ENCODE measurements at regions of chr12 and their contacts with region 1.

Region 1: GRCh38 chr12:92505254-92506231 is 197.2 kb upstream of the PLEKHG7 start:
- DNase-seq: peak in 1 of 2 donors; percentile 79
- H3K4me3 ChIP-seq: peak overlapping the region; percentile 20 to 44
- H3K27ac ChIP-seq: peak overlapping the region; percentile 82
- H3K4me1 ChIP-seq: peaks cover 5 to 23% of the 10 kb centered on the region in 2 donors
- H3K27me3 ChIP-seq: no peaks in the 10 kb centered on the region
- CTCF ChIP-seq: no peak

Region 2: GRCh38 chr12:92445253-92446082 is 60.1 kb before region 1 on chr12:
- intact Hi-C with region 1: no loop called
- DNase-seq: peak in 1 of 2 donors; percentile 63
- H3K4me3 ChIP-seq: no peak overlapping the region
- H3K27ac ChIP-seq: peak overlapping the region; percentile 12 to 44
- H3K4me1 ChIP-seq: no peaks in the 10 kb centered on the region
- H3K27me3 ChIP-seq: no peaks in the 10 kb centered on the region
- CTCF ChIP-seq: no peak

Region 3: GRCh38 chr12:92546635-92547348 is 41.2 kb after region 1 on chr12:
- intact Hi-C with region 1: no loop called
- DNase-seq: no peak
- H3K4me3 ChIP-seq: no peak overlapping the region
- H3K27ac ChIP-seq: no peak overlapping the region
- H3K4me1 ChIP-seq: no peaks in the 10 kb centered on the region
- H3K27me3 ChIP-seq: no peaks in the 10 kb centered on the region
- CTCF ChIP-seq: no peak

Region 4: GRCh38 chr12:92561543-92561899 is 56.0 kb after region 1 on chr12:
- intact Hi-C with region 1: loop called (anchors 2 kb)
- DNase-seq: peak; percentile 14 to 80
- H3K4me3 ChIP-seq: peak overlapping the region in 1 of 2 donors; percentile 2
- H3K27ac ChIP-seq: peak overlapping the region; percentile 27 to 52
- H3K4me1 ChIP-seq: peaks cover 11 to 21% of the 10 kb centered on the region in 2 donors
- H3K27me3 ChIP-seq: no peaks in the 10 kb centered on the region
- CTCF ChIP-seq: no peak

Region 5: DNA sequence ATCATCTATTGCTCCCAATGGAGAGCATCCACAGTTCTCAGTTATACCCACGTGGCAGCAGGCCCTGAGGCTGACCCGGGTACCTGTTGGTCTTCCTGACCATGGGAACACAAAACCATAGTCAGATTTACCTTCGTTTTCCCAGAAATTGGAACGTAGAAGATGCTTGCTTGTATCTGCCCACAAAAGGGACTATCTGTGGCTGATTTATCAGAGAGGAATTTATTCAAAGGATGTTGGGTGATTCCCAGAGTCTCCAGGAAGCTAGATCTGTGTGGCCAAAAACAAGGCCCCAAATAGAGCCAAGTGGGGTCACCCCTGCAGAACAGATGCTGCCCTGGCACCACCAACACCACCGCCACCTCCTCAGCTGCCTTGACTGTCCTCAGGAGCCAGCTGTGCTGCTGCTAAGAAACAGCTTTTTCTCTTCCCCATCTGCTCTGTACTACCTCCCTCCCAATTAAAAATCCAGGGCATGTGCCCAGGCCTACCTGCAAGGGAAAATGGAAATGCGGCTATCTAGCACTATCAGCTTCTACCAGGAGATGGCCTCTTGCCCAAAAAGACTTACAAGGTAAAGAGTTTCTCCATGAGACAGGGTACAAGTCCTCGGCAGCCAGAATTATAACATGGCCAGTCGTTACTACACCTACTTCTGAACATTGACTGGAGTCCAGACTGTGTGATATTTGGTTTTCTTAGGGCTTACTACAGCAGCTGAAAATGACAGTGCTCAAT is 68.7 kb after region 1 on chr12:
- intact Hi-C with region 1: no loop called
- DNase-seq: no peak
- H3K4me3 ChIP-seq: no peak overlapping the region
- H3K27ac ChIP-seq: no peak overlapping the region
- H3K4me1 ChIP-seq: no peaks in the 10 kb centered on the region
- H3K27me3 ChIP-seq: no peaks in the 10 kb centered on the region
- CTCF ChIP-seq: no peak

Region 6: DNA sequence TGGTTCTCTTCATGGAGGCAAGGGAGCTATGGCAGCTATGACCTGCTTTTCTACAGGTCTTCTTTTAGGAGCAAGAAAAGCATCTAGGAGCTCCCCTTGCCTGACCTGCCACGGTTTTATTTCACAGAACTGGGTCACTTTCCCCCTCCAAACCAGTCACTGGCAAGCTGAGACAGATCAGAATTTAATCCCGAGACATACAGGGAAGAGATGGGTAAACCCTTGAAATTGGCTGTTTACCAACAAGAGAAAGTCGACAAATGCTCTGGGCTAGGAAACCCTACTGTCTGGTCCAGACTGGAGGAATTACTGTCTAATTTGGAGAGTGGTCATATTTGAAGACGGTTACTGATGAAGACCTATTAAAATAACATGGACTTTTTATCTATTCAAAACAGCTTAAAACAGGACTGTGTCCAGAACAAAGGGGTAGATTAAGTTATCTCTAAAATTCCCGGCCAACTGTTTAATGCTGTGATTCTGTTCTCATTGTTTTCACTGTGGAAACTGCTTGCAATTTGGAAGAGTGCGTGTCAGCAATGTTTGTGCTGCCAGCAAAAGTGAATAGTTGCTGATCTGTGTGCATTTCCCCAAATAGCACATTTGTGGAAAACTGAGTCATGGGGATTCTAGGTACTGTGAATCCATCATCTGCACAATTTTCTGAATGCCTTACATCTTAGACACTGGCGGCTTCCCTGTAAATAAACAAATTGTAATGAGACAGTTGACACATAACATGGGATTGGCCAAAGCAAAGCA is 496.9 kb after region 1 on chr12:
- intact Hi-C with region 1: no loop called
- DNase-seq: peak in 1 of 2 donors; percentile 75
- H3K4me3 ChIP-seq: no peak overlapping the region
- H3K27ac ChIP-seq: peak overlapping the region; percentile 15 to 64
- H3K4me1 ChIP-seq: peaks cover 0 to 4% of the 10 kb centered on the region in 2 donors
- H3K27me3 ChIP-seq: no peaks in the 10 kb centered on the region
- CTCF ChIP-seq: no peak